ENCODE measurements at regions of chr10 and their contacts with region 1.

Region 1: DNA sequence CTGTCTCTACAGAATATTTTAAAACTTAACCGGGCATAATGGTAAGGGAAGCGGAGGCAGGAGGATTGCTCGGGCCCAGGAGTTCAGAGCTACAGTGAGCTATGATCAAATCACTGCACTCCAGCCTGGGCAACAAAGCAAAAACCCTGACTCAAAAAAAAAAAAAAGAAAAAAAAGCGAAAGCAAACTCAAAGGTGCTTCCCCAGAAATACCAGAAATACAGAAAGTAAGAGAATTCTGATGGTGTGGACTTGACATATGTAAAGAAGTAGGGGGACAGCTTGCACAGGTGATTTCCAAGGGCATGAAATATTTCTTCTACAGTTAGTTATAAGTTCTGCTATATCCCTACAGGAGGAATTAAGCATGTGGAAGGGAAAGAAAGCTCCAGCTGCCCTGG is 69.7 kb upstream of the APBB1IP start:
- DNase-seq: no peak
- ATAC-seq: no peak
- H3K4me3 ChIP-seq: no peak overlapping the region
- H3K4me3 Mint-ChIP-seq: no peak overlapping the region
- H3K27ac ChIP-seq: no peak overlapping the region
- H3K27ac Mint-ChIP-seq: no peak overlapping the region
- H3K4me1 ChIP-seq: no peaks in the 10 kb centered on the region
- H3K4me1 Mint-ChIP-seq: no peaks in the 10 kb centered on the region
- H3K27me3 ChIP-seq: peaks cover 0 to 2% of the 10 kb centered on the region in 2 experiments
- H3K27me3 Mint-ChIP-seq: peaks cover 0 to 4% of the 10 kb centered on the region in 2 donors

Region 2: GRCh38 chr10:26334932-26335573 is 33.4 kb before region 1 on chr10:
- CTCF ChIA-PET with region 1: interaction called in 1 of 2 experiments, 11 read pairs
- POLR2A ChIA-PET with region 1: no interaction called
- DNase-seq: peak; percentile 28 to 85 (median 52)
- ATAC-seq: peak; percentile 85 to 92 (median 87)
- H3K4me3 ChIP-seq: peak overlapping the region; percentile 57 to 67
- H3K4me3 Mint-ChIP-seq: peak overlapping the region; percentile 75 to 83 (median 81)
- H3K27ac ChIP-seq: no peak overlapping the region
- H3K27ac Mint-ChIP-seq: peak overlapping the region; percentile 21 to 56
- H3K4me1 ChIP-seq: peaks cover 0 to 5% of the 10 kb centered on the region in 2 experiments
- H3K4me1 Mint-ChIP-seq: peaks cover 6 to 9% (median 8%) of the 10 kb centered on the region in 3 donors
- H3K27me3 ChIP-seq: peaks cover 0 to 4% of the 10 kb centered on the region in 2 experiments
- H3K27me3 Mint-ChIP-seq: no peaks in the 10 kb centered on the region